Activated naive CD4-positive, alpha-beta T cell treated with anti-CD3 and anti-CD28 coated beads for 36 hours (primary cell): ENCODE measurements at regions of chr20 and their contacts with region 1.

Region 1: GRCh38 chr20:5078399-5078958 is 41.3 kb downstream of the PCNA start:
- DNase-seq: peak; percentile 95
- H3K4me3 Mint-ChIP-seq: peak overlapping the region; percentile 60
- H3K27ac Mint-ChIP-seq: peak overlapping the region; percentile 92
- H3K4me1 Mint-ChIP-seq: peaks cover 41% of the 10 kb centered on the region
- H3K27me3 Mint-ChIP-seq: no peaks in the 10 kb centered on the region

Region 2: DNA sequence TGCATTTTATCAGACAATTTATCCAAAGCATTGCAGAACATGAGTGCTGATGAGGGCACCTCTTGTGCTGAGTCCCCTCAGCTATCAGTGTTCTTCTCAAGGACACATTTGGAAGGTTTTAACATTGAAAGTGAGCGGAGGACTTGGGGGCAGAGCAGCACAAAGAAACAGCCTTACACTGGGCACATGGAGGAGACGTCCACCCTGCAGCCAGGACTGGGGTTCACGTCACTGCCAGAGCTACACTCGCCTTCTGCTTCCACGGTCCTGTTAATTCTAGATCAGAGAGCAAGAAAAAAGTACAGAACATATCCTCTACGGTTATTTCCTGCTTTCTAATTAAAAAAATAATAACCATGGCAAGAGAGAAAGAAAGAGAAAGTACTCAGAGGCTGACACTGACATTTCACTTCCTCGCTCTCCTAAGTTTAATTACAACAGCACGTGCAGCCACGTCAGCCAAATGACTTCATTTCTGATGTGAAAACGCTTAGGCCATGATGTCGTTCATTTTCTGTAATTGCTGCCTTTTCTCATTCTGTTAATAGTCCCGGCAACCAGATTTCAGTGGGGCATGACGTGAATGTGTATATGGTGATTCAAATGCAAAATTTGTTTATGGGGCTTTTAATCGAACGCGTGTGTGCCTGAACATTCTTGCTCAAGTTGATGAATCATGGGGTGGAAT is 351.6 kb before region 1 on chr20:
- CTCF ChIA-PET with region 1: no interaction called
- intact Hi-C with region 1: loop called (anchors 1 kb)
- DNase-seq: peak; percentile 89
- H3K4me3 Mint-ChIP-seq: peak overlapping the region; percentile 40
- H3K27ac Mint-ChIP-seq: peak overlapping the region; percentile 46
- H3K4me1 Mint-ChIP-seq: peaks cover 13% of the 10 kb centered on the region
- H3K27me3 Mint-ChIP-seq: no peaks in the 10 kb centered on the region

Region 3: GRCh38 chr20:4973330-4974097 is 105.0 kb before region 1 on chr20:
- CTCF ChIA-PET with region 1: interaction called, 3 read pairs
- intact Hi-C with region 1: loop called (anchors 1 kb)
- DNase-seq: peak; percentile 68
- H3K4me3 Mint-ChIP-seq: peak overlapping the region; percentile 33
- H3K27ac Mint-ChIP-seq: peak overlapping the region; percentile 33
- H3K4me1 Mint-ChIP-seq: peaks cover 36% of the 10 kb centered on the region
- H3K27me3 Mint-ChIP-seq: no peaks in the 10 kb centered on the region

Region 4: DNA sequence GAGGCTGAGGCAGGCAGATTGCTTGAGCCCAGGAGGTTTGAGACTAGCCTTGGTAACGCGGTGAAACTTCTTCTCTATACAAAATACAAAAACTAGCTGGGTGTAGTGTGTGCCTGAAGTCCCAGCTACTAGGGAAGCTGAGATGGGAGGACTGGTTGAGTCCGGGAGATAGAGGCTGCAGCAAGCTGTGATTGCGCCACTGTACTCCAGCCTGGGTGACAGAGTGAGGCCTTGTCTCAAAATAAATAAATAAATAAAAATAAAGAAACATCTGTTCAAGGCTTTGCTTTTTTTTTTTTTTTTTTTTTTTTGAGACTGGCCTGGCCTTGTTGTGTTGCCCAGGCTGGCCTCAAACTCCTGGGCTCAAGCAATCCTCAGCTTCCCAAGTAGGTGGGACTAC is 53.5 kb before region 1 on chr20:
- CTCF ChIA-PET with region 1: no interaction called
- intact Hi-C with region 1: no loop called
- DNase-seq: no peak
- H3K4me3 Mint-ChIP-seq: no peak overlapping the region
- H3K27ac Mint-ChIP-seq: no peak overlapping the region
- H3K4me1 Mint-ChIP-seq: no peaks in the 10 kb centered on the region
- H3K27me3 Mint-ChIP-seq: no peaks in the 10 kb centered on the region

Region 5: GRCh38 chr20:5056801-5057599 is 21.5 kb before region 1 on chr20:
- CTCF ChIA-PET with region 1: interaction called, 16 read pairs
- intact Hi-C with region 1: loop called (anchors 1 kb)
- DNase-seq: peak; percentile 84
- H3K4me3 Mint-ChIP-seq: peak overlapping the region; percentile 10
- H3K27ac Mint-ChIP-seq: peak overlapping the region; percentile 46
- H3K4me1 Mint-ChIP-seq: peaks cover 16% of the 10 kb centered on the region
- H3K27me3 Mint-ChIP-seq: no peaks in the 10 kb centered on the region

Region 6: DNA sequence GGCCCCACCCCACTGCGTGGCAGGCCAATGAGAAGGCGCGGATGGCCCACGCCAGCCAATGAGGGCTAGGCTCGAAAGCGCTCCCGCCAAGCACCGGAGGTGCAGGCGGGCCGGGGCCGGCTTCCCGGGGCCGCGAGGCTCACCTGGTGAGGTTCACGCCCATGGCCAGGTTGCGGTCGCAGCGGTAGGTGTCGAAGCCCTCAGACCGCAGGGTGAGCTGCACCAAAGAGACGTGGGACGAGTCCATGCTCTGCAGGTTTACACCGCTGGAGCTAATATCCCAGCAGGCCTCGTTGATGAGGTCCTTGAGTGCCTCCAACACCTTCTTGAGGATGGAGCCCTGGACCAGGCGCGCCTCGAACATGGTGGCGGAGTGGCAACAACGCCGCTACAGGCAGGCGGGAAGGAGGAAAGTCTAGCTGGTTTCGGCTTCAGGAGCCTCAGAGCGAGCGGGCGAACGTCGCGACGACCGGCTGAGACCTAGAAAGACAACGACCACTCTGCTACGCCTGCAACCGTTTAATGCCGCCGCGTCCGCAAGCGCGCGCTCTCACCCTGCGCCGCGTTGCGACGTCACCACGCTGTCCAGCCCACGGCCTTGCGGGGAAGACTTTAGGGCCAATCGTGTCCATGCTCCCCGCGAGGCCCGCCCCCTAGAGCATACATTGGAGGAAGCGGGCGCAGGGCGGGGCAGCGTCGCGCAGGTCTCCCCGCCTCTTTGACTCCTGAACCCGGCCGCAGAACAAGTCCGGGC is 41.1 kb after region 1 on chr20 and contains the start of gene PCNA:
- CTCF ChIA-PET with region 1: no interaction called
- intact Hi-C with region 1: loop called (anchors 1 kb)
- DNase-seq: peak; percentile 99
- H3K4me3 Mint-ChIP-seq: peak within 1 kb of the TSS; percentile 93
- H3K27ac Mint-ChIP-seq: peak within 1 kb of the TSS; percentile 99
- H3K4me1 Mint-ChIP-seq: peaks cover 44% of the 10 kb centered on the region
- H3K27me3 Mint-ChIP-seq: no peaks in the 10 kb centered on the region
- total RNA-seq, gene PCNA: 631 to 641 TPM